Left colon (tissue), 2 donors: ENCODE measurements at regions of chr4 and their contacts with region 1.

Region 1: GRCh38 chr4:17817020-17817419 is 6.2 kb downstream of the NCAPG start:
- DNase-seq: no peak
- ATAC-seq: peak; percentile 78

Region 2: GRCh38 chr4:18593445-18594002 is 776.5 kb after region 1 on chr4:
- intact Hi-C with region 1: loop called in 1 of 2 experiments (anchors 5 kb)
- DNase-seq: peak; percentile 34 to 44
- ATAC-seq: peak; percentile 71